ENCODE measurements at regions of chrX and their contacts with region 1.

Region 1: DNA sequence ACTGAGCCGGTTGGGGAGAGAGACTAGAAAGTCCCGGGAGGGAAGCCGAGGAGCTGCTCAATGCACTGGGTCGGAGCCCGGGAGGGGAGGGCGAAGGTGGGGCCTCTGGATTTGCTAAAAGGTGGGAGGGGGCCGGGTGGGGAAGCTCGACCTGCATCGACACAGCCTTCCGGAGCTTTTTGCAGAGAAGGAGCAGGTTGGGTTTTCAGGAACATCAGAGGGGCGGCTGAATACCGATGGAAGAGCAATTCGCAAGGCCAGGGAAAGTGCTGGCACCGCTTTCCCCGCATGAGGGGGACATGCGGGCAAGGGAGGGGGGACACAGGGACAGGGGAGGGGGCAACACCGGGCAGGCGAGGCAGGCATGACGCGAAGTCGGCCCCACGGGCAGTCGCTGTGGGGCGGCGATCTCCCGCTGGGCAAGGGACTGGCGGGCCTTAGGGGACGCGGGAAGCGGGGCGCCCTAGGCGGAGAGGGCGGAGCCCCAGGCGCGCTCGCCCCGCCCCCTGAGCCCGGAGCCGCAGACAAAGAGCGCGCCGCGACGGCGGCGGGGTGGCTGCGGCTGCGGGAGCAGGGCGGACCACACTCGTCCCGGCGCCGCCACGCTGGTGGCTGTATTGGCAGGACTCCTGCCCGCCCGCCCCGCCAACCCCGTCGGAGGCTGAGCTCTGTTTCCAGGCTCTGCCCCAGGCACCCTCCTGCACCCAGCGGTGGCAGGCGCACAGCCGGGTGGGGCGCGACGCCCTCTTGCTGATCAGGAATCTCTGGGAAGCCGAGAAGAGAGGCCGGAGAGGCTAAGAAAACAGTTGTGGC is 11.6 kb downstream of the PDZD4 start:
- DNase-seq: peak in 1 of 2 experiments; percentile 65
- H3K4me3 ChIP-seq: peak overlapping the region; percentile 46
- H3K4me3 Mint-ChIP-seq: peak overlapping the region; percentile 65
- H3K27ac Mint-ChIP-seq: no peak overlapping the region
- H3K4me1 ChIP-seq: no peaks in the 10 kb centered on the region
- H3K4me1 Mint-ChIP-seq: no peaks in the 10 kb centered on the region
- H3K27me3 ChIP-seq: no peaks in the 10 kb centered on the region
- H3K27me3 Mint-ChIP-seq: no peaks in the 10 kb centered on the region
- CTCF ChIP-seq: no peak

Region 2: DNA sequence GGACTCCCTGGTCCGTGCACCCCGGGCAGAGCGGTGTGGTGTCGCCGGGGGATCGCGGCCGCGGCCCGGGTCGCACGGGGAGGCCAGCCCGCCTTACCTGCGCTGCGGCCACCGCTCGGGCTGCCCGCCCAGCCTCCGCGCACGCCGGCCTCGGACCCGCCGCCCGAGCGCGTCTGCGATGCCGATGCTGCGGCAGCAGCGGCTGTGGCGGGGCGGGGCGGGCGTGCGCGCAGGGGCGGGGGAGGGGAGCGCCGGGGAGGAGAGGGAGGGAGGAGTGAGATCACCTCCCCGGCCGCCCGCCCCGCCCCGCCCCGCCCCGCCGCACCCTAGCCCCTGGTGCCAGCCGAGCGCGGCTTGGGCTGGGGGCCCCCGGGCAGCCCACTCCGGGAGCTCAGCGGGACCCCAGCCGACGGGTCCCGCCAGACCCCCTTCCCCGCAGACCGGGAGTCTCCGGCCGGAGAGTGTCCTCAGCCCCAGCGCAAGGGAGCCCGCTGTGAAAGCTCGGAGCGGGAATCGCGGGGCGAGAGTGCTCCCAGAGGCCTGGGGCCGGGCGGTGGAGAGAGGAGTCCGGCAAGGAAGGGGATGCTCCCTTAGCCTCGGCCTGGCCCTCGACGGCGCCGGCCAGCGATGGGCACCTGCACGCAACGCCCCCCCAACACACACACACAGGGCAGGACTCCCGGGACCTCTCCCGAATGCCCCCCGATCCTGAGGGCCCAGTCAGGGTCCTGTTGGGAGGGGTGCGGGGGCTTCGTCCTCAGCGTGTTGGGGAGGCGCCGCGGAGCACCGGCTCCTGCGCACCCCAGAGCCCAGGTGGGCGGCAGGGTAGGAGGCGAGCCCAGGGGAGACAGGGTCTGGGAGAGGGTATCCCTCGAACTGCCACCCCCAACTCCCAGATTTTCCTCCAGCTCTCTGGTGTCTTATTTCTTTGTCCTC is 67.5 kb after region 1 on chrX and contains the start of gene L1CAM:
- CTCF ChIA-PET with region 1: no interaction called
- POLR2A ChIA-PET with region 1: no interaction called
- intact Hi-C with region 1: loop called (anchors 10 kb)
- DNase-seq: no peak
- H3K4me3 ChIP-seq: peak within 1 kb of the TSS; percentile 16
- H3K4me3 Mint-ChIP-seq: peak within 1 kb of the TSS; percentile 54
- H3K27ac Mint-ChIP-seq: no peak within 1 kb of the TSS
- H3K4me1 ChIP-seq: peaks cover 13% of the 10 kb centered on the region; the same call in 1 of the 2 replicates
- H3K4me1 Mint-ChIP-seq: no peaks in the 10 kb centered on the region
- H3K27me3 ChIP-seq: no peaks in the 10 kb centered on the region
- H3K27me3 Mint-ChIP-seq: no peaks in the 10 kb centered on the region
- CTCF ChIP-seq: no peak
- total RNA-seq, gene L1CAM: 12.7 and 12.8 TPM in 2 replicates